ENCODE measurements at regions of chr4 and their contacts with region 1.

Region 1: GRCh38 chr4:16516796-16517439 is 290.6 kb upstream of the TAPT1 start:
- DNase-seq: peak; percentile 46 to 71 (median 66)
- H3K4me3 ChIP-seq: no peak overlapping the region
- H3K27ac ChIP-seq: no peak overlapping the region
- H3K4me1 ChIP-seq: peaks cover 9% of the 10 kb centered on the region
- H3K27me3 ChIP-seq: no peaks in the 10 kb centered on the region
- CTCF ChIP-seq: peak in 1 of 3 donors; percentile 32
- EP300 ChIP-seq: no peak
- POLR2A ChIP-seq: no peak

Region 2: DNA sequence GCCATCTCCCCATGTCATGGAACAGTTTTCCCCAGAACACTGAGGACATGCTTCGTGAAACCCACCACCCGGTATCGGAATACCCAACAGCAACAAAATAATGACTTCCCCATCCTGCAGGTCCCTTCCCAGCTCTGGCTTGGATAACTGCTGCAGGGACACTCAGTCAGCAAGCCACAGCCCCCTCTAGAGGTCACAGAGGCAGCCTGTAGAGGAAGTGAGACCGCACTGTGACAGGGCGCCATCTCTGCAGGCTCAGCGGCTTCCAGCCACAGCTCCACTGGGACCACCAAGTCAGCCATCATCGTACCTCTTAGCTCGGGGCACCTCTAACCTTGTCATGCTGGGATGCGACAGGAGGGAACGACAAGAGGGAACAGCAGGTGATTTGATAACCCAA is 65.6 kb after region 1 on chr4:
- intact Hi-C with region 1: no loop called
- DNase-seq: no peak
- H3K4me3 ChIP-seq: no peak overlapping the region
- H3K27ac ChIP-seq: no peak overlapping the region
- H3K4me1 ChIP-seq: peaks cover 6% of the 10 kb centered on the region
- H3K27me3 ChIP-seq: no peaks in the 10 kb centered on the region
- CTCF ChIP-seq: no peak
- EP300 ChIP-seq: no peak
- POLR2A ChIP-seq: no peak

Region 3: DNA sequence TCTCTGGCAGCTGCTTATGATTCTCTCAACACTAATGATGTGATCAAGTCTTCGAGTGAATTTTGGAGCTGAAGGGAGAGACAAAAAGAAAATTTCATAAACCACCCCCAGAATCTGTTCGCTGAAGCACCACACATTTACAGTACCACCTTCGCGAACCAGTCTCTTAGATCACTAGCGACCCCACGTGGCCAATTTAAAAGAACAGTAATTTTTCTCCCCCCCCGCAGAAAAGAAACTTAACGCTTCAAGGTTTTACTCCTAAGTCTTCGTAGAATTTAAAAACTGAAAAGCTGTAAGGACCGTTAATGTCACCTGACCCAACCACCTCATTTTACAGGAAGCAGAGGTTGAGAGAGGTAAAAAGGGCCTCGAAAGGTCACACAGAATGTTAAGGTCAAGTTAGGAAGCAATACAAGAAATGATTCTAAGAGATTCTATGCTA is 807.5 kb after region 1 on chr4:
- intact Hi-C with region 1: loop called in 1 of 4 experiments (anchors 10 kb)
- DNase-seq: peak; percentile 13 to 41 (median 35)
- H3K4me3 ChIP-seq: no peak overlapping the region
- H3K27ac ChIP-seq: no peak overlapping the region
- H3K4me1 ChIP-seq: no peaks in the 10 kb centered on the region
- H3K27me3 ChIP-seq: no peaks in the 10 kb centered on the region
- CTCF ChIP-seq: peak in 2 of 3 donors; percentile 25 to 52
- EP300 ChIP-seq: no peak
- POLR2A ChIP-seq: no peak

Measured in ovary (tissue), 10 donors.